ENCODE measurements at regions of chr11 and their contacts with region 1.

Region 1: GRCh38 chr11:12599408-12600143 is 74.6 kb upstream of the TEAD1 start:
- DNase-seq: peak; percentile 22
- H3K4me3 Mint-ChIP-seq: no peak overlapping the region
- H3K27ac Mint-ChIP-seq: no peak overlapping the region
- H3K4me1 Mint-ChIP-seq: no peaks in the 10 kb centered on the region
- H3K27me3 Mint-ChIP-seq: peaks cover 6% of the 10 kb centered on the region

Region 2: GRCh38 chr11:12331239-12331874 is 268.2 kb before region 1 on chr11:
- intact Hi-C with region 1: loop called (anchors 1 kb)
- DNase-seq: peak; percentile 48
- H3K4me3 Mint-ChIP-seq: no peak overlapping the region
- H3K27ac Mint-ChIP-seq: no peak overlapping the region
- H3K4me1 Mint-ChIP-seq: peaks cover 6% of the 10 kb centered on the region
- H3K27me3 Mint-ChIP-seq: peaks cover 1% of the 10 kb centered on the region

Region 3: DNA sequence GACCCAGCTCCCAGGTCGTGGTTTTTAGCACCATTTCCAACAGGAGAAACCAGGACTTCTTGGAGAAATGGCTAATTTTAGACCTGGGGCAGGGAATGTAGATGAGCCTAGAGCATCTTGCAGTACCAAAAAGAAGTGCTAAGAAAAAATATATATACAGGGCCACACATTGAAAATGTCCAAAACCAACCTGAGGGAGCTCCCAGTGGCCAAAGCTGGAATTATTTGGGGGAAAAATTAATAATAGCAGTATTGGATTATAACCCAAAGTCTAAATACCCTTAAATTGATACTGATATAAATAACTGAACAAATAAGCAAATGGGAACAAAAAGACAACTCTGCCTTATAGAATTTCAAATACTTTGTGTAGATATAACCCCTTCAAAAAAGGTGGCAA is 114.2 kb before region 1 on chr11:
- intact Hi-C with region 1: no loop called
- DNase-seq: no peak
- H3K4me3 Mint-ChIP-seq: no peak overlapping the region
- H3K27ac Mint-ChIP-seq: no peak overlapping the region
- H3K4me1 Mint-ChIP-seq: no peaks in the 10 kb centered on the region
- H3K27me3 Mint-ChIP-seq: no peaks in the 10 kb centered on the region

Region 4: DNA sequence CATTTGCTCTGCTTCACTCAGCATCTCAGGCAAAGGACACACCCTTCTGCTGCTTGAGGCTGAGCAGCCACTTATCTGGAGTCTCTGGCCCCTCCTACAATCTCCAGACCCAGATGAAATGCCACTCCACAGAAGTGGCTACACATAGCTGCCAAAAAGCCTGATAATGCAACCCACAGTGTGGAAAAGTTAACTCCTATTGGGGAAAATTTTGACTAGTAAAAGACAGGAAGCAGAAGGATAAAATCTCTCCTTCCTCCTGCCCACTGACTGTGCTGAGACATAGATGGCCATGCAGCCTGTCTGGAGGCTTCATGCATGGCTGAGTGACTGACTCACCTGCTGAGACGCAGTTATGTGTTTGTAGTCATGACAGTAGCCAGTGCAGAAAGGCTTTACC is 17.7 kb before region 1 on chr11:
- intact Hi-C with region 1: no loop called
- DNase-seq: no peak
- H3K4me3 Mint-ChIP-seq: no peak overlapping the region
- H3K27ac Mint-ChIP-seq: no peak overlapping the region
- H3K4me1 Mint-ChIP-seq: no peaks in the 10 kb centered on the region
- H3K27me3 Mint-ChIP-seq: peaks cover 8% of the 10 kb centered on the region

Region 5: DNA sequence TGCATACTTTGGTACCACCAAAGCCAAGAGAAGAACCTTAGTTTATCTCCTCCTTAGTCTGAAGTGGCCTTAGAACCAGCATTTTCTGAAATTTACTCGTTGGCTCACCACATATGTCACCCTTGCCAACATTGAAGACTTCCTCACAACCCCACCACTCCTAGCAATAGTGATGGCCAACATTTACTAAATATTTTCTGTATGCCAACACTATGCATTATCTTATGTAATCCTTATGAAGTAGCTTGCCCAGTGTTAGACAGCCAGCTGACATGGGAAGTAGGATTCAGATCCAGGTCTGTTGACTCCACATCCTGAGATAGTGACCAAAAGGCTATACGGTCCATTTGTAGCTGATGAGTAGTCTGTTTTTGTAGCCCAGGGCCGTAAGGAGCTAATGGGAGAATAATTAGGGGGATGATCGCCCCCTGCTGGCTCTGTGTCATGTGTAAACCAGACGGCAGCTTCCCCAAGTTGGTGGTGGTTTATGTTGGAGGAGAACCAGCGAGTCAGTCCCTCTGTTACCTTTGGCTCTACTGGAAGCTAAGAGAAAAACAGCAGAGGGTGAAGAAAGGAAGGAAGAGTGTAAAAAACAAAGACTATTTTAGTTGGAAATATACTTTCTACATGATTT is 289.1 kb after region 1 on chr11:
- intact Hi-C with region 1: loop called (anchors 1 kb)
- DNase-seq: peak; percentile 21
- H3K4me3 Mint-ChIP-seq: no peak overlapping the region
- H3K27ac Mint-ChIP-seq: no peak overlapping the region
- H3K4me1 Mint-ChIP-seq: no peaks in the 10 kb centered on the region
- H3K27me3 Mint-ChIP-seq: peaks cover 12% of the 10 kb centered on the region